ENCODE measurements at regions of chr1 and their contacts with region 1.

Region 1: GRCh38 chr1:15696956-15697521 is 12.9 kb downstream of the PLEKHM2 start:
- DNase-seq: peak; percentile 60
- ATAC-seq: peak; percentile 86
- H3K4me3 Mint-ChIP-seq: peak overlapping the region; percentile 92
- H3K27ac Mint-ChIP-seq: peak overlapping the region; percentile 100
- H3K4me1 Mint-ChIP-seq: peaks cover 22% of the 10 kb centered on the region
- H3K27me3 Mint-ChIP-seq: no peaks in the 10 kb centered on the region

Region 2: GRCh38 chr1:15617175-15617880 is 79.7 kb before region 1 on chr1 and contains the start of gene DDI2:
- POLR2A ChIA-PET with region 1: interaction called, 13 read pairs
- DNase-seq: peak; percentile 97
- ATAC-seq: peak; percentile 91
- H3K4me3 Mint-ChIP-seq: peak within 1 kb of the TSS; percentile 93
- H3K27ac Mint-ChIP-seq: peak within 1 kb of the TSS; percentile 90
- H3K4me1 Mint-ChIP-seq: peaks cover 24% of the 10 kb centered on the region
- H3K27me3 Mint-ChIP-seq: no peaks in the 10 kb centered on the region
- total RNA-seq, gene DDI2: 31.6 to 33.3 TPM

Region 3: DNA sequence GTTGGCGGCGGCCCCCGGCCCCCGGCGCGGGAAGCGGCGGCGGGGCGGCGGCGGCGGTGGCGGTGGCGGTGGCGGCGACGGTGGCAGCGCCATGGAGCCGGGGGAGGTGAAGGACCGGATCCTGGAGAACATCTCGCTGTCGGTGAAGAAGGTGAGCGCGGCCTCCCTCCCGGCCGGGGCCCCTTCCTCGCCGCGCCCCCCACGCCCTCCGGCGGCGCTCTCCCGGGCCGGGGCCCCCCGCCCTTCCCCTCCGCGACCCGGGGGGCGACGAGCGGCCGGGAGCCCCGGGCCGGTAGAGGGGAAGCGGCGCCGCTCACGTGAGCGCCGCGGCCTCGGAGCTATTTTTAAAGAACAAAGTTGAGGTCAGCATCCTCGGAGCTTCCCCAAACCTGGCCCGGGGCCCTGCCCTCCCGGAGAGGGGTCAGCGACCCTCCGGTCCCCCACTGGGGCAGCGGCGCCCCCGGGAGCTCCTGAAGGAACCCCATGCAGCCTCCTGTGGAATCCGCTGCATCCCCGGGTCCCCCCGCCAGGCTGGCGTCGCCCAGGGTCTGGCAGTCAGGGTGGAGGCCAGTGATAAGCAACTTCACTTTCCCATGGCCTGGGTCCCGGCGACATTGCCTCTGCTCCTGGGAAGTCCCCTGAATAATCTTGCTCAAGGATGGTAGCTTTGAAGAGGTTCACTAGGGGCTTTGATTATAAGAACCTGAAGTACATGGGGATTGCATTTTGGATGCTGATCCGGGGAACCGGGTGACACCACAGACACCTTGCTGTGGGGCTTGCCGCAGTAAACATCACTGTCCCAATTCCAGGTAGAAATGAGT is 12.4 kb before region 1 on chr1:
- POLR2A ChIA-PET with region 1: interaction called, 37 read pairs
- DNase-seq: peak; percentile 65
- ATAC-seq: peak; percentile 47
- H3K4me3 Mint-ChIP-seq: peak overlapping the region; percentile 83
- H3K27ac Mint-ChIP-seq: peak overlapping the region; percentile 81
- H3K4me1 Mint-ChIP-seq: peaks cover 23% of the 10 kb centered on the region
- H3K27me3 Mint-ChIP-seq: no peaks in the 10 kb centered on the region

Region 4: DNA sequence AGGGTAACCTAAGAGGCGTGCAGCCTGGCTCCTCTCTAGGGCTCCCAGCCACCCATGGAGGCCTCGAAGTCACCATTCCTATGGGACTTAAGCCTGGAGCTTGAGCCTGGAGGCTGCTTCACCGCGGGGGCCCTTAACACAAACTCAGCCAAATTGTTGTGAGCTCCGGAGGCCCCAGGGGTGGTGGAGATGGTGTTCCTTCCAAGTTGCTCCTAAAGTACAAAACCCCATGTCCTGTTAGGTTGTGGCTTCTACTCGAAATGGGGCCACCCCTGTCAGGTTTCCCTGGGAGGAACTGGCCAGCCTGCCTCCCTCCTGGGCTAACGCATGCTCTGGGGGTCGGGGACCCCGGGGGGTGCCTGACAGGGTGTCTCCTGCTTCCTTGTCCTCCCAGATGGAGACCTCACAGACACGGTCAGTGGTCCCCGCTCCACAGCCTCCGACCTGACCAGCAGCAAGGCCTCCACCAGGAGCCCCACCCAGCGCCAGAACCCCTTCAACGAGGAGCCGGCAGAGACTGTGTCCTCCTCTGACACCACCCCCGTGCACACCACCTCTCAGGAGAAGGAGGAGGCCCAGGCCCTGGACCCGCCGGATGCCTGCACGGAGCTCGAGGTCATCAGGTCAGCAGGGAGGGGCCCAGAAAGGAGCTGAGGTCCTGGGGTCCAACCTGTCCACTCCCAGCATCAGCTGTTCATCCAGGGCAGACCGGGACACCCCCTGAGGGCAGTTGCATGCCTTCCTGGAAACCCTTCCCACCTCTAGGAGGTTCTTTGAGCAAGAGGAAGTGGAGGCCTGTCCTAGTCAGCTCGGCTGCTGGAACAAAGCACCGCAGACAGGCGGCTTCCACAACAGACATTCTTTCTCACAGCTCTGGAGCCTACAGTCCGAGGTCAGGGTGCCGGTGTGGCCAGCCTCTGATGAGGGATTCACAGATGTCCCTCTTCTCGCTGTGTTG is 28.2 kb after region 1 on chr1:
- POLR2A ChIA-PET with region 1: no interaction called
- DNase-seq: no peak
- ATAC-seq: no peak
- H3K4me3 Mint-ChIP-seq: no peak overlapping the region
- H3K27ac Mint-ChIP-seq: no peak overlapping the region
- H3K4me1 Mint-ChIP-seq: no peaks in the 10 kb centered on the region
- H3K27me3 Mint-ChIP-seq: no peaks in the 10 kb centered on the region